ENCODE measurements at regions of chr20 and their contacts with region 1.

Region 1: GRCh38 chr20:52529826-52530225 is 338.2 kb upstream of the ZFP64 start:
- DNase-seq: no peak
- H3K4me3 ChIP-seq: no peak overlapping the region
- H3K27ac ChIP-seq: no peak overlapping the region
- H3K4me1 ChIP-seq: no peaks in the 10 kb centered on the region
- H3K27me3 ChIP-seq: no peaks in the 10 kb centered on the region
- CTCF ChIP-seq: no peak

Region 2: DNA sequence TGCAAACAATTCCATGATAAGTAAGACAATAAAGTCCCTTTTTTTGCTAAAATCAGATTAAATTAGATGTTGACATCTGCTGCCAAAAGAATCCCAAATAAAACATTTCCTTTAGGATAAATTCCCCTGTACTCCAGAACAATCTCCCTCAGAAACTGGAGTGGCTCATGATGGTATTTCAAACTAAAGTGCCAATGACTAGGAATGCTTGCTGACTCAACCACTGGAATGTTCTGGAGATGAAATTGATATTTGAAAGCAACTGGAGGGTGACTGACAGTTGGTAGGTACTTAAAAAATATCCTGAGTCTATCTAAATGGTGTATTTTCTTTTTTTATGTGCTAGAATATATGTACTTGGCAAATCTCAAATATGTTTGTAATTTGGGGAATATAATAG is 92.3 kb after region 1 on chr20:
- CTCF ChIA-PET with region 1: no interaction called
- dilution Hi-C with region 1: loop called (anchors 5 kb)
- in situ Hi-C with region 1: no loop called
- intact Hi-C with region 1: no loop called
- DNase-seq: no peak
- H3K4me3 ChIP-seq: no peak overlapping the region
- H3K27ac ChIP-seq: no peak overlapping the region
- H3K4me1 ChIP-seq: no peaks in the 10 kb centered on the region
- H3K27me3 ChIP-seq: no peaks in the 10 kb centered on the region
- CTCF ChIP-seq: no peak

Measured in mammary epithelial cell (primary cell).